GM12878 (cell line): ENCODE measurements at regions of chr6 and their contacts with region 1.

Region 1: DNA sequence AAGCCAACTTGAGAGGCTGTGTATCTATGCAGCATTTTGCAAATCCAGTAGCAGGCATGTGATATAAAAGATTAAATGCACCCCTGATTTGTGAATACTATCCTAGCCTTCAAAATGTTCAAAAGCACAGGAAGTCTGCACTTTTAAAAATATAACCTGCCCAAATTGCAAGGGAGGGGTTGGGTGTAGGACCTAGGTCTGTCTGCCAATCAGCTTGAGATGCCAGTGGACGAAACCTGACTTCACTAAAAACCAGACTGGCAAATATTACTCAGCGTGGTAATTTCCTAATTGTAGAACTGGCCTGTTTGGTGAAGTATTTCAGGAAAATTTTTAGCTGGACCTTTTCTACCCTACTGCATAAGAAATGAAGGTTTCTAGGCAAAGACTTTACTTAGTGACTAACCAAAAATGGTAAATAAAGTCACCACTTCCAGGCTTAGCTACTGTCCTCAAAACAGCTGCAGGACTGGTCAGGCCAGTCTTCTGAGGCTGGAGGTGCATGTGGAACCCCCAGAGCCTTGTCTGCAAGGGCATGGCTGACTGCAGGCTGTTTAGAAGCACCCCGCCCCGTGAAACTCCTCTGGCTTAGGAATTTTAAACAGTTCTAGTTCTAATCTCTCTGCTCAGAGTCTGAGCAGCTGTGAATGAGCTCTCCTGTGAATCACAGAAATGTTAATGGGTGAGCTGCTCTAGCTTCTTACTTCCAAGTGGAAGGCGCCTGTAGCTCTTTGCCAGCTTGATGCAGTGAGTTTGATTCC is 104.5 kb upstream of the ESR1 start:
- DNase-seq: no peak
- ATAC-seq: peak; percentile 85
- H3K4me3 ChIP-seq: no peak overlapping the region
- H3K27ac ChIP-seq: no peak overlapping the region
- H3K4me1 ChIP-seq: peaks cover 8% of the 10 kb centered on the region
- H3K27me3 ChIP-seq: no peaks in the 10 kb centered on the region; a peak in 1 of 4 replicates
- CTCF ChIP-seq: no peak
- EP300 ChIP-seq: no peak
- POLR2A ChIP-seq: no peak
- RAD21 ChIP-seq: no peak

Region 2: DNA sequence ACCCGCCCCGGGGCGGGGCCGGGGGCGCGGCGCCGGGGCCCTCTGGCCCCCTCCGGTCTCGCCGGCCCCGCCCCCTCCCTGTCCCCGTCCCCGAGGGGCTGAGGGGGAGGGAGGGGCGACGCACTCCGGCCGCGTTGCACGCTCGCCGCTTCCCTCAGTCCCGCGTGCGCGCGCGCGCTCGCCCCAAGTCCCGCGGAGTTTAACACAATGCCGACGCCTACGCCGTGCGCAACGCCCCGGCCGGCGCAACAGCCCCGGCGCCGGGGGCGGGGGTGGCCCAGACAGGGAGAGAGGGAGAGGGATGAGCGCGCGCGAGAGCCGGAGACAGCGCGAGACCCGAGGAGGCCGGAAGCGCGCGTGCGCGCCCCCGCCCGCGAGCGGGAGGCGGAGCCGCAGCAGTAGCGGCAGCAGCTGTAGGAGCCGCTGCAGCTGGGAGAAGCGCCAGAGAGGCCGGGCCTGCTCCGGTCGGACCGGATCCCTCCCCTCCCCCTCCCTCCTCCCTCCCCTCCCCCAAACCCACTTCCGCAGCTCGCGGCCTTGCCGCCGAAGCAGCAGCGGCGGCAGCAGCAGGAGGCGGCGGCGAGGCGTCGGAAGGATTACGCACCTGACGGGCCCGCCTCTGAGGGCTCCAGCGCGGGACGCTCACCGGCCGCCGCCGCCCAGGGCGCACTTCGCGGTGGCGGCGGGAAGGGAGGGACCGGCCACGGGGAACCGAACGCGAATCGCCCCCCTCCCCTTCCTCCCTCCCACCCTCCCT is 312.6 kb before region 1 on chr6:
- CTCF ChIA-PET with region 1: no interaction called
- POLR2A ChIA-PET with region 1: no interaction called
- RAD21 ChIA-PET with region 1: no interaction called
- SMC1A ChIA-PET with region 1: no interaction called
- in situ Hi-C with region 1: no loop called
- intact Hi-C with region 1: loop called (anchors 5 kb)
- DNase-seq: peak; percentile 94
- ATAC-seq: peak; percentile 87
- H3K4me3 ChIP-seq: peak overlapping the region; percentile 82; the same call in 1 of the 2 replicates
- H3K27ac ChIP-seq: peak overlapping the region; percentile 95
- H3K4me1 ChIP-seq: peaks cover 29% of the 10 kb centered on the region
- H3K27me3 ChIP-seq: no peaks in the 10 kb centered on the region
- CTCF ChIP-seq: no peak
- EP300 ChIP-seq: no peak
- POLR2A ChIP-seq: peak; percentile 88
- RAD21 ChIP-seq: no peak

Region 3: DNA sequence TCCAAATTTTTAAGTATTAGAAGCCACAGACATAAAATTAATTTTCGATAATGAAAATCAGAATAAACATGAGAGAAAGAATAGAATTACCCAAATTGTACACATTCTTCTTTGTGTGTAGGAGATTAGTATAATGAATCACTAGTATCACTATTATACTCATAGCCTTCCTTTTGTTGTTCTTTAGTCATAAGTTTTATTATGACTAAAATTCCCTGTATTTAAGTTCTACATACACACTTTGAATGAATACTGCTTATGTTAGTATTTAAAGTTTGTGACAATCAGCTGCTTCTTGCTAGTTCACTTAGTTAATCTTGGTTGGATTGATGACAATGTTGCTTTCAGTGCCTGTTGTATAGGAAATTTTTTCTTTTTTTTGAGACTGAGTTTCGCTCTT is 136.5 kb before region 1 on chr6:
- CTCF ChIA-PET with region 1: no interaction called
- POLR2A ChIA-PET with region 1: no interaction called
- RAD21 ChIA-PET with region 1: no interaction called
- SMC1A ChIA-PET with region 1: no interaction called
- in situ Hi-C with region 1: no loop called
- intact Hi-C with region 1: no loop called
- DNase-seq: no peak
- ATAC-seq: no peak
- H3K4me3 ChIP-seq: no peak overlapping the region
- H3K27ac ChIP-seq: no peak overlapping the region
- H3K4me1 ChIP-seq: no peaks in the 10 kb centered on the region
- H3K27me3 ChIP-seq: no peaks in the 10 kb centered on the region
- CTCF ChIP-seq: no peak
- EP300 ChIP-seq: no peak
- POLR2A ChIP-seq: no peak
- RAD21 ChIP-seq: no peak

Region 4: DNA sequence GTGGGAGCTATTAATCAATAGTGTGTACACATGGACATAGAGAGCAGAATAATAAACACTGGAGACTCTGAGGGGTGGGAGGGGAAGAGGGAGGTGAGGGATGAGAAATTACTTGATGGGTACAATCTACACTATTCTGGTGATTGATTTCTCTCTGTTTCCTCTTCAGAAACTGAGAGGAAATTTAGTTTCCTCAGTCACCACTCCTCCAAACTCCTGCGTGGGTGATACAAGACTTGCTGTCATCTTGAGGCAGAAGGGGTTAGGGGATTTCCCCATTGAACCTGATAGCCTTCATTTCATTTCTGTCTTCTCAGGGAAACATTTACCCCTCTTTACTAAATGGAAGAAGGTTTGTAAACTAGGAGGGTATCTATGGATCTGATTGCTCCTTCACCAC is 20.1 kb after region 1 on chr6:
- CTCF ChIA-PET with region 1: interaction called, 11 read pairs
- POLR2A ChIA-PET with region 1: interaction called, 11 read pairs
- RAD21 ChIA-PET with region 1: interaction called, 7 read pairs
- SMC1A ChIA-PET with region 1: interaction called, 89 read pairs
- in situ Hi-C with region 1: no loop called
- intact Hi-C with region 1: no loop called
- DNase-seq: no peak
- ATAC-seq: peak; percentile 90
- H3K4me3 ChIP-seq: no peak overlapping the region
- H3K27ac ChIP-seq: no peak overlapping the region
- H3K4me1 ChIP-seq: peaks cover 7% of the 10 kb centered on the region
- H3K27me3 ChIP-seq: no peaks in the 10 kb centered on the region
- CTCF ChIP-seq: no peak
- EP300 ChIP-seq: no peak
- POLR2A ChIP-seq: no peak
- RAD21 ChIP-seq: no peak

Region 5: DNA sequence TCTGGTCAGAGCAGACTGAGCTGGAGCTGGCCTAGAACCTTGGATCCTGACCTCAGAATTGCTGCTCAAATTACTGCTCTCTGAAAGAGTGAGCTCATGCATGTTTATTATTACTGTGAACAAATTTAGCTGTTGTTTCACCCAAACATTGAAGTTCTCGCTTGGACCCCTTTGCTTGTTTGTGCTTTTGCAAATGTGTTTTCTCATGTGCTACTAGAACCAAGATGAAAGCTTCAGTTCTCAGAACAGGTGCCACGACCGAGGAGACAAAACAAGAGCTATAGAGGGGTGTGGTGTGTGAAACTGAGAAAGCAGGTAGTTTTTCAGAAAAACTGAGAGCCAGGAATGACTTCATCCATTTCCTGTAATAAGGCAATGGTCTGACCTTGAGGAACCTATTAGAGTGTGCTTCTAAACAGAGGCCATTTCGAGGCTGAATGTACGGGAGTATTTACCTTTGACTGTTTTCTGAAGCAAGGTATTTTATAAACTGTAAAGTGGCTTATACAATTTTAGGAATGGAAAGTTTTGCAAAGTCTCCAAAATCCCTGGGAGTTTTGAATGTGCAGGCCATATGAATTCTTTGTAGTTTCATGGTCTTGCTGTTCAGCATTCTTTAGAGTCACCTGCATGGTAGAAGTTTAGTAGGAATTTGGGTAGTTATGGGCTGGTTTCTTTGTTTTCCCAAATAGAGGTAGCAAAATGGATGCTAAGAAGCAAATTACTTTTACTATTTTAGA is 54.6 kb after region 1 on chr6:
- CTCF ChIA-PET with region 1: interaction called, 6 read pairs
- POLR2A ChIA-PET with region 1: interaction called, 5 read pairs
- RAD21 ChIA-PET with region 1: interaction called, 28 read pairs
- SMC1A ChIA-PET with region 1: interaction called, 51 read pairs
- in situ Hi-C with region 1: no loop called
- intact Hi-C with region 1: no loop called
- DNase-seq: peak; percentile 69
- ATAC-seq: peak; percentile 97
- H3K4me3 ChIP-seq: no peak overlapping the region
- H3K27ac ChIP-seq: 0 out of 2 replicates have a peak overlapping the region, but pooled peaks have one; percentile 58
- H3K4me1 ChIP-seq: peaks cover 12% of the 10 kb centered on the region
- H3K27me3 ChIP-seq: no peaks in the 10 kb centered on the region
- CTCF ChIP-seq: no peak
- EP300 ChIP-seq: peak; percentile 34 to 57; a peak in 3 of 4 replicates
- POLR2A ChIP-seq: no peak
- RAD21 ChIP-seq: no peak

Region 6: DNA sequence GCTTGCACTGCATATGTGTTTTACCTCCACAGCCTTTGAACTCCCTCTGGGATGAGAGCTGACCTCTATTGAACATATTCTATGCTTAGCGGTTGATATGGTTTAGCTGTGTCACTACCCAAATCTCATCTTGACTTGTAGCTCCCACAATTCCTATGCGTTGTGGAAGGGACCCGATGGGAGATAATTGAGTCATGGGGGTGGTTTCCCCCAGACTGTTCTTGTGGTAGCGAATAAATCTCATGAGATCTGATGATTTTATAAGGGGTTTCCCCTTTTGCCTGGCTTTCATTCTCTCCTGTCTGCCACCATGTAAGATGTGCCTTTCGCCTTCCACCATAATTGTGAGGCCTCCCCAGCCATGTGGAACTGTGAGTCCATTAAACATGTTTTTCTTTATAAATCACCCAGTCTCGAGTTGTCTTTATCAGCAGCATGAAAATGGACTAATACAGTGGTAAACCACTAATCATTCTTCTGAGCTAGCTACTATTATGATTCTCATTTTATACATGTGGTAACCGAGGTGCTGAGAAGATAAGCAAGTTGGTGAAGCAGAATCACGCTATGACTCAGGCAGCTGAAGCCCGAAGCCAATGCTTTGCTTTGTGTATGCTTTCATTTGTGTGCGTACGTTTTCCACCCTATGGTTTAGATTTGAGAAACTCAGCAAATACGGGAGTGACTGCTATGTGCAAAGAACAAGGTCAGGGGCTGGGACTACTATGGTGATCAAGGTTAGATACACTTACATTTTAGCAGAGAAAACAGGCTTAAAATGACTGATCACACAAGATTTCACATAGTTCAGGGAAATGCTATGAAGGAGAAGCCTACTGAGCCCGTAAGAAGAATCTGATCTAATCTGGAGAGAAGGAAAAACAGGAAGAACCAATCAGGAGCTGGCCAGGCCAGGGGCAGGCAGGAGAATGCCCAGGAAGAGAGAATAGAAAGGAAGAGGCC is 468.0 kb after region 1 on chr6:
- CTCF ChIA-PET with region 1: no interaction called
- POLR2A ChIA-PET with region 1: no interaction called
- RAD21 ChIA-PET with region 1: no interaction called
- SMC1A ChIA-PET with region 1: no interaction called
- in situ Hi-C with region 1: no loop called
- intact Hi-C with region 1: loop called (anchors 2 kb)
- DNase-seq: peak; percentile 89
- ATAC-seq: peak; percentile 98
- H3K4me3 ChIP-seq: peak overlapping the region; percentile 39; the same call in 1 of the 2 replicates
- H3K27ac ChIP-seq: peak overlapping the region; percentile 80
- H3K4me1 ChIP-seq: peaks cover 13% of the 10 kb centered on the region; the same call in 1 of the 2 replicates
- H3K27me3 ChIP-seq: no peaks in the 10 kb centered on the region
- CTCF ChIP-seq: no peak
- EP300 ChIP-seq: peak; percentile 86 to 88
- POLR2A ChIP-seq: no peak
- RAD21 ChIP-seq: no peak

Region 7: GRCh38 chr6:152295346-152295745 is 592.3 kb after region 1 on chr6:
- CTCF ChIA-PET with region 1: interaction called, 6 read pairs
- POLR2A ChIA-PET with region 1: no interaction called
- RAD21 ChIA-PET with region 1: interaction called, 11 read pairs
- SMC1A ChIA-PET with region 1: interaction called, 8 read pairs
- in situ Hi-C with region 1: no loop called
- intact Hi-C with region 1: no loop called
- DNase-seq: no peak
- ATAC-seq: no peak
- H3K4me3 ChIP-seq: no peak overlapping the region
- H3K27ac ChIP-seq: no peak overlapping the region
- H3K4me1 ChIP-seq: peaks cover 6% of the 10 kb centered on the region
- H3K27me3 ChIP-seq: no peaks in the 10 kb centered on the region
- CTCF ChIP-seq: no peak
- EP300 ChIP-seq: no peak
- POLR2A ChIP-seq: no peak
- RAD21 ChIP-seq: no peak